Mammary epithelial cell (primary cell): ENCODE measurements at regions of chr2 and their contacts with region 1.

Region 1: GRCh38 chr2:237966565-237967462 is at the start of gene UBE2F:
- DNase-seq: peak; percentile 94
- H3K4me3 ChIP-seq: peak within 1 kb of the TSS; percentile 40 to 95 (median 88)
- H3K27ac ChIP-seq: no peak within 1 kb of the TSS
- H3K4me1 ChIP-seq: peaks cover 14% of the 10 kb centered on the region
- H3K27me3 ChIP-seq: no peaks in the 10 kb centered on the region
- CTCF ChIP-seq: no peak
- total RNA-seq, gene UBE2F: 41.5 to 69.3 TPM

Region 2: GRCh38 chr2:238030422-238031154 is 63.8 kb after region 1 on chr2:
- CTCF ChIA-PET with region 1: no interaction called
- dilution Hi-C with region 1: no loop called
- in situ Hi-C with region 1: no loop called
- intact Hi-C with region 1: loop called (anchors 5 kb)
- DNase-seq: no peak
- H3K4me3 ChIP-seq: no peak overlapping the region
- H3K27ac ChIP-seq: no peak overlapping the region
- H3K4me1 ChIP-seq: peaks cover 25% of the 10 kb centered on the region
- H3K27me3 ChIP-seq: no peaks in the 10 kb centered on the region
- CTCF ChIP-seq: peak in 1 of 2 donors; percentile 16

Region 3: DNA sequence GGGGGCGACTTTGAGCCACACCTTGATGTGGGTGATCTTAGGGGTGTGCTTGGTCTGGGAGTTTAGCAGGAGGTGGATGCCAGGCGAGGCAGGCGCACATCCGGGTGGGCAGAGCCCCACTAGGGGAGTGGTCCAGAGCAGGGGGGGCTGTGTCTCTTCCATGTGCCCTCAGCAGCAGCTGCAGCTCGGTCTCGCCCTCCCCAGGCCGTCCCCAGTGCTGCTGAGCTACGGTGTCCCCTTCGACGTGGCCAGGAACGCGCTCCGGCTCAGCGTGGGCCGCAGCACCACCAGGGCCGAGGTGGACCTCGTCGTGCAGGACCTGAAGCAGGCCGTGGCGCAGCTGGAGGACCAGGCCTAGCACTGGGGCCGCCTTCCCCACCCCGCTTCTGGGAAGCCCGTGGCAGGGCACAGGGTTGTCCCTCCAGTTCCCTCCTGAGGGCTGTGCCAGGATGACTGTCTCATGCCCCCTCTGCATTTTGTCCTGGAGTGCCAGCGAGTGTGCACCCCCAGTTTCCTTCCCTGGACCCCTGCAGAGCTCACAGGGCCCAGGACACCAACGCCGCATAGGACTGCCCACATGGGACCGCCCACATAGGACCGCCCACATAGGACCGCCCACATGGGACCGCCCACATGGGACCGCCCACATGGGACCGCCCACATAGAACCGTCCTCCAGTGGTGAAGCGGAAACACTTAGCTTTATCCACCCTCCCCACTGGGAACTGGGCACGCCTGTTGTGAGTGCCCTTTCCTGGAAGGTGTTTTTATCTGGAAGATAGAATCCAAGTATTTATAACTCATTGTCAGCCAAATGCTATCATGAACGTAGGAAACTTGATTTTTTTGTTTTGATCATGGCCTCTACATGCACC is 131.4 kb after region 1 on chr2:
- CTCF ChIA-PET with region 1: no interaction called
- dilution Hi-C with region 1: no loop called
- in situ Hi-C with region 1: no loop called
- intact Hi-C with region 1: no loop called
- DNase-seq: no peak
- H3K4me3 ChIP-seq: no peak overlapping the region
- H3K27ac ChIP-seq: no peak overlapping the region
- H3K4me1 ChIP-seq: no peaks in the 10 kb centered on the region
- H3K27me3 ChIP-seq: no peaks in the 10 kb centered on the region
- CTCF ChIP-seq: no peak

Region 4: GRCh38 chr2:238169708-238170251 is 203.0 kb after region 1 on chr2:
- CTCF ChIA-PET with region 1: no interaction called
- dilution Hi-C with region 1: no loop called
- in situ Hi-C with region 1: no loop called
- intact Hi-C with region 1: loop called (anchors 5 kb)
- DNase-seq: peak; percentile 92
- H3K4me3 ChIP-seq: no peak overlapping the region
- H3K27ac ChIP-seq: peak overlapping the region; percentile 79
- H3K4me1 ChIP-seq: peaks cover 28% of the 10 kb centered on the region
- H3K27me3 ChIP-seq: no peaks in the 10 kb centered on the region
- CTCF ChIP-seq: no peak

Region 5: GRCh38 chr2:238263204-238264071 is 296.6 kb after region 1 on chr2:
- CTCF ChIA-PET with region 1: no interaction called
- dilution Hi-C with region 1: no loop called
- in situ Hi-C with region 1: no loop called
- intact Hi-C with region 1: loop called (anchors 2 kb)
- DNase-seq: peak; percentile 67
- H3K4me3 ChIP-seq: no peak overlapping the region
- H3K27ac ChIP-seq: no peak overlapping the region
- H3K4me1 ChIP-seq: peaks cover 22% of the 10 kb centered on the region
- H3K27me3 ChIP-seq: no peaks in the 10 kb centered on the region
- CTCF ChIP-seq: peak; percentile 78 to 79